Activated naive CD4-positive, alpha-beta T cell treated with anti-CD3 and anti-CD28 coated beads for 36 hours (primary cell): ENCODE measurements at regions of chr17 and their contacts with region 1.

Region 1: DNA sequence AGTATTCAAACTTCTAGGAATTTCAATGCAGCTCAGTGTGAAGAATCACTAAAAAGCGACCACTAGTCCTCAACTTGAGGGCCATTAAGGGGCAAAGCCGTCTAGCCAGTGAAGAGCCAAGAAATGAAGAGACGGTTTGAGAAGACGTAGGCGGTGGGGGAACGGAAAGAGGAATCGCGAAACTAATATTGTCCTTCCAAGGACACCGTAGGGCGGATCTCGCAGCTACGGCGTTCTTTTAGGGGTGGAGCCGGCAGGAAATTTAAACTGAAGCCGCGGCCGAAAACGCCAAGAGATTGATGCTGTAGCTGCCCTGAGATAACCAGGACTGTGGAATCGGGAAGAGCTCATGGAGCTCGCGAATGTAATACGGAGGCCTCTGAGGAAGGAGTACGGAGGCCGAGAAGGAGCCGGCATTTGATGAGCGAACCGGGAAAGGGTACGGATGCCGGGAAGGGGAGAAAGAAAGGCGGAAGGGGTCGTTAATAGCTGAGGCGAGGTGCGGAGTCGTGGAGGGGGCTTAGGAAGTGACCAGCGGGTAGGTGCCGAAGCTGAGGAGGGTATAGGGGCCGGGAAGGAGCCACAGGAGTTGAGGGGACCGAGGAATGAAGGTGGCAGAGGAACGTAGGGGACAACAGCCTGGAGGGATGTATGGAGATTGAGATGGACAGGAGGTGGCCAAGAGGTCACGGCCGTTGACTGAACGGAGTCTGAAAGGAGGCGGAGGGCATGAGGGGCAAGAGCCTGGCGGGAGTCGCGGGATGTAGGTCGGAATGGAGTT is at the start of gene DBF4B:
- DNase-seq: peak; percentile 93
- H3K4me3 Mint-ChIP-seq: no peak within 1 kb of the TSS
- H3K27ac Mint-ChIP-seq: no peak within 1 kb of the TSS
- H3K4me1 Mint-ChIP-seq: peaks cover 5% of the 10 kb centered on the region
- H3K27me3 Mint-ChIP-seq: no peaks in the 10 kb centered on the region
- total RNA-seq, gene DBF4B: 28.5 to 29.5 TPM

Region 2: DNA sequence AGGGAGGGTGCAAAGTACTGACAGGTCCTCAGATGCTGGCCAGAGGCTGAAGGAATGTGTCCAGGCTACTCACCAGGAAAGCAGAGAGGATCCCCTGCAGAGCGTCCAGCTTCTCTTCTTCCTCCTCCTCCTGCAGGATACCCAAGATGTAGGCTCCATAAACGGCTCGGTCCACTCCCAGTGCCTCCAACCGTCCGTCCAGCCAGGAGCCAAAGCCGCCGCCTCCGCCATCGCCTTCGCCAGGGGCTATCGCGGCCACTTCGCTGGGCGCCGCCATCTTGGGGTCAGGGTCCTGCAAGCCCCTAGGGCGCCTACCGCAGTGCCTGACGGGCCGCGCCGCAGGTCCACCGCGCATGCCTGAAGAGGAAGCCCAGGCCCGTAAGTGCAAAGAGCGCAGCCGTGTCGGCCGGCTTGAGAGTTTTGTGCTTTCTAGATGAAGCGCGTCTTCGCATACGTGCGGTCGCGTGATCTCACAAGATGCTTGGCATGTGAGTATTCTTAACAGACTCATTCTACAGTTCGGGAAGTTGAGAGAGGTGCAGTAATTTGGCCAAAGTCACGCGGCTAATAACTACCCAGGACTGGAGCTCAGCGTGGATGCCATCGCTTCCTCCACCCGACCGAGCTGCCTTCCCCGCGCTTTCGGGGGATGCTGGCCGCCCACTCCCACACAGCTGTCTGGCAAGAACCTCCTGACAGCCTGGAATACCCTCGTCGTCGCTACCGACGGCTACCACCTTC is 18.9 kb before region 1 on chr17 and contains the start of gene CCDC43:
- CTCF ChIA-PET with region 1: interaction called, 4 read pairs
- intact Hi-C with region 1: loop called (anchors 1 kb)
- DNase-seq: peak; percentile 94
- H3K4me3 Mint-ChIP-seq: peak within 1 kb of the TSS; percentile 99
- H3K27ac Mint-ChIP-seq: peak within 1 kb of the TSS; percentile 89
- H3K4me1 Mint-ChIP-seq: peaks cover 24% of the 10 kb centered on the region
- H3K27me3 Mint-ChIP-seq: no peaks in the 10 kb centered on the region
- total RNA-seq, gene CCDC43: 29.1 to 31.8 TPM

Region 3: DNA sequence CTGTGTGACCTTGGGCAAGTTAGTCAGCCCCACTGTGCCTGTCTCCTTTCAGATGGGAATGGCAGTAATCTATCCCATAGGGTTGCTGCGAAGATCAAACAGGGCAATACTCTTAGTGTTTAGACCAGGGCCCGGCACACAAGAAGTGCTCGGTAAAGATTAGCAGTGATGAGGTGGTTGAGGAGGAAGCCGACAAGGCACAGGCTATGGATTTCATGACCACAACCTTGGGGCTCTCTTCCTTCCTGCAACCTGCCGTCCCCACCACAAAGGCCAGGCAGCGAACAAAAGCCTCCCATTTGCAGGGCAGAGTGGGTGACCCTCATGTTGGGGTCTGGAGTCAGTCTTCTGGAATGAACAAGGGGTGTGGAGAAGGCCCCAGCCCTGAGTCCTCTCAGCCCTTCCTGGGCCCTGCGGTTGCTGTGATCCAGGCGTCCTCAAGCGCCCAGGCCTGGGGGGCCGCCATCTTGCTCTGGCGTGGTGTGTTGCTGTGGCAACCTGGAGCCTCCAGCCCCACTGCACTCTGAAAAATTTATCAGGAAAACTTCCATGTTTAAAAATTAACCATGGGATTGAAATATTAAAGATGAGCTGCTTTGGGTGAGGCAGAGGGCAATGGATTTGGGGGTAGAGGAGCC is 60.0 kb after region 1 on chr17:
- CTCF ChIA-PET with region 1: no interaction called
- intact Hi-C with region 1: no loop called
- DNase-seq: no peak
- H3K4me3 Mint-ChIP-seq: no peak overlapping the region
- H3K27ac Mint-ChIP-seq: no peak overlapping the region
- H3K4me1 Mint-ChIP-seq: no peaks in the 10 kb centered on the region
- H3K27me3 Mint-ChIP-seq: peaks cover 15% of the 10 kb centered on the region